ENCODE measurements at regions of chr12 and their contacts with region 1.

Region 1: DNA sequence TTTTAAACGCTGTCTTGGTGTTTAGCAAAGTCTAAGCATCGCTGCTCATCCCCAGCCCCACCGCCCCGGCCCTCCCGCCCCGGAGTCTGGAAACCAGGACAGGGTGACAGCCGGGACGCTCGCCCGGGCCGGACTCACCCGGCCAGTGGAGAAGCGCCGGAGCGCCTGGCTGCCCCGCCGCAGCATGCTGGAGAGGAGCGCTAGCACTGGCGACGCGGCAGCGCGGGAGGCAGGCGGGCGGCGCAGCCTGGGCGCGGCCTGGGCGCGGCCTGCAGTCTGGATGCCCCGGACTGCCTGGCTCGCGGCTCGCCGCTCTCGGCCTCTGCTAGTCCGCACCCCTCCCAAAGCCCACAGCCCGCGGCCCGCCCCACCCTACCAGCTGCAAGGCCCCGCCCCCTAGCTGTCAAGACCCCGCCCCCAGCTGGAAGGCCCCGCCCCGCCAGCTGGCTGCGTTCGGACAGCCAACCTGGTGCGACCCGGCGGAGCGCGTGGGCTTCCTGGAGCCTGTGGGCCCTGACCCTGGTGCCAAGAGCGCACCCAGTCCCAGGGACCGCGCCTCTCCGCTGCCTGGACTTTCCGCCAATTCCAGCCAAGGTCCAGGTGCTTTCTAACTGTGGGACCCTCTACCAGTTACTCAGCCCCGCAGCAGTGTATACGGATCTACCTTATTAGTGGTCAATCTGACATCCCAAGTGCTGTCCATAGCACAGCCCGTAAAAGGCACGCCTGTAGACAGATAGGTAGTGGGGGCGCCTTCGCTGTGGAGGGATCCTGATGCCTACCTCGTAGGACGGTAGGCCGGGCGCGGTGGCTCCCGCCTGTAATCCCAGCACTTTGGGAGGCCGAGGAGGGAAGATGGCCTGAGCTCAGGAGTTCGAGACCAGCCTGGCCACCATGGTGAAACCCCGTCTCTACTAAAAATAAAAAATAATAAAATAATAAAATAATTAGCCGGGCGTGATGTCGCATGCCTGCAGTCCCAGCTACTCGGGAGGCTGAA is at the start of gene ALDH1L2:
- DNase-seq: peak; percentile 76
- CTCF ChIP-seq: no peak

Region 2: GRCh38 chr12:105060715-105061378 is 23.7 kb before region 1 on chr12:
- CTCF ChIA-PET with region 1: no interaction called
- POLR2A ChIA-PET with region 1: no interaction called
- DNase-seq: no peak
- CTCF ChIP-seq: no peak

Region 3: DNA sequence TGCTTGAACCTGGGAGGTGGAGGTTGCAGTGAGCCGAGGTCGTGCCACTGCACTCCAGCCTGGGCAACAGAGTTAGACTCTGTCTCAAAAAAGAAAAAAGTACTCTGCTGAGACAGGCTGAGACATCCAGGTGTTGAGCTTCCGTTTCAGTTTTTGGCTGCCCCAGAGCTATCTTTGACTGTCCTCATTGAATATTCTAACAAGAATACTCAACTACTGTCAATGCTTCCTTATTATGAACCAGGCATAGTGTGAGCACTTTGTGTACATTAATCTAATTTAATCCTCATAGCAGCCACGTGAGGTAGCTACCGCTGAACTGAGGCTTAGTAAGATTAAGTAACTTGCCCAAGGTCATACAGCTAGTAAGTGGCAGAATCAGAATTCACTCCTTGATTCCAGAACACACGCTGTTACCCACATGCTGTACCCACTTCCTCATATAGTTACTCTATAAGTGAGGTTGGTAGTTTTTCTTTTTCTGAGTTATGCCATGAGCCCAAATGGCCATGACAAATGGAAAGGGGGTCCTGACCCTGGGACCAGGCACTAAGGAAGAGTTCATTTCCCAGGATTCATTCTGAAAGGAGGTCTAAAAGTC is 11.6 kb before region 1 on chr12:
- CTCF ChIA-PET with region 1: interaction called, 12 read pairs
- POLR2A ChIA-PET with region 1: no interaction called
- DNase-seq: peak; percentile 22
- CTCF ChIP-seq: no peak

Measured in GM10248 (cell line).